HepG2 (cell line): ENCODE measurements at regions of chr1 and their contacts with region 1.

Region 1: DNA sequence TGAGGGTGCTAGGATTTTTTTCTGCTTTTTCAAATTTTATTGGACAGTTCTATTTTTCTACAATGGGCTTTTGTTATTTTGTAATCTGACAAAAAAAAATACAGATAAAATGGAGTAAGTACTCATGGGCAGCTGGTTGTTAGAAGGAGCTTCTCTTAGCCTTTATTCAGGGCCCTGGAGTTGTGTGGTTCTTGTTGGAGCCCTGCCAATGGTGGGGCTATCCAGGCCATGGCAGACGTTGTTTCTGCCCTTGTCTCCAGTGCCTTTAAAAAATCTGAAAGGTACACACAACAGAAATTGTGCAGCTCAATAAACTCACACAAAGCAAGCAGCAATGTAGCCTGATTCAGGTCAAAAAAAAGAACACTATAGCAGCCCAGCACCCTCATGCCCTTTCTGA is 153.5 kb upstream of the GALNT2 start:
- DNase-seq: no peak
- ATAC-seq: no peak
- H3K4me3 ChIP-seq: no peak overlapping the region
- H3K27ac ChIP-seq: no peak overlapping the region
- H3K4me1 ChIP-seq: no peaks in the 10 kb centered on the region
- H3K27me3 ChIP-seq: peaks cover 1 to 3% of the 10 kb centered on the region in 2 experiments; a peak in 2 of 5 replicates
- CTCF ChIP-seq: no peak
- EP300 ChIP-seq: no peak
- POLR2A ChIP-seq: no peak
- RAD21 ChIP-seq: no peak

Region 2: GRCh38 chr1:229972600-229973296 is 59.3 kb after region 1 on chr1:
- CTCF ChIA-PET with region 1: no interaction called
- POLR2A ChIA-PET with region 1: no interaction called
- in situ Hi-C with region 1: no loop called
- intact Hi-C with region 1: loop called (anchors 10 kb)
- DNase-seq: peak; percentile 9
- ATAC-seq: peak; percentile 87
- H3K4me3 ChIP-seq: no peak overlapping the region
- H3K27ac ChIP-seq: no peak overlapping the region
- H3K4me1 ChIP-seq: no peaks in the 10 kb centered on the region
- H3K27me3 ChIP-seq: 0 out of 5 replicates have a peak, but pooled peaks cover 0 to 3% of the 10 kb centered on the region in 2 experiments
- CTCF ChIP-seq: peak; percentile 67
- EP300 ChIP-seq: no peak
- POLR2A ChIP-seq: no peak
- RAD21 ChIP-seq: peak; percentile 60